ENCODE measurements at regions of chr22 and their contacts with region 1.

Region 1: GRCh38 chr22:35840302-35840739 is 122.6 kb downstream of the APOL5 start:
- DNase-seq: peak; percentile 62 to 97
- ATAC-seq: peak; percentile 84 to 88
- H3K4me3 ChIP-seq: peak overlapping the region; percentile 69
- H3K27ac ChIP-seq: peak overlapping the region; percentile 79 to 90
- H3K4me1 ChIP-seq: peaks cover 52% of the 10 kb centered on the region
- CTCF ChIP-seq: no peak
- EP300 ChIP-seq: no peak
- POLR2A ChIP-seq: no peak
- RAD21 ChIP-seq: 0 out of 5 replicates have a peak, but pooled peaks of 1 of the 2 experiments have one; percentile 16

Region 2: GRCh38 chr22:35705141-35705540 is 135.2 kb before region 1 on chr22:
- CTCF ChIA-PET with region 1: no interaction called
- POLR2A ChIA-PET with region 1: no interaction called
- DNase-seq: no peak
- ATAC-seq: peak in 1 of 2 experiments; percentile 41; a peak in 2 of 6 replicates
- H3K4me3 ChIP-seq: no peak overlapping the region
- H3K27ac ChIP-seq: no peak overlapping the region; a peak in 1 of 6 replicates
- H3K4me1 ChIP-seq: peaks cover 3% of the 10 kb centered on the region; the same call in 1 of the 3 replicates
- CTCF ChIP-seq: no peak
- EP300 ChIP-seq: no peak
- POLR2A ChIP-seq: no peak
- RAD21 ChIP-seq: no peak

Region 3: DNA sequence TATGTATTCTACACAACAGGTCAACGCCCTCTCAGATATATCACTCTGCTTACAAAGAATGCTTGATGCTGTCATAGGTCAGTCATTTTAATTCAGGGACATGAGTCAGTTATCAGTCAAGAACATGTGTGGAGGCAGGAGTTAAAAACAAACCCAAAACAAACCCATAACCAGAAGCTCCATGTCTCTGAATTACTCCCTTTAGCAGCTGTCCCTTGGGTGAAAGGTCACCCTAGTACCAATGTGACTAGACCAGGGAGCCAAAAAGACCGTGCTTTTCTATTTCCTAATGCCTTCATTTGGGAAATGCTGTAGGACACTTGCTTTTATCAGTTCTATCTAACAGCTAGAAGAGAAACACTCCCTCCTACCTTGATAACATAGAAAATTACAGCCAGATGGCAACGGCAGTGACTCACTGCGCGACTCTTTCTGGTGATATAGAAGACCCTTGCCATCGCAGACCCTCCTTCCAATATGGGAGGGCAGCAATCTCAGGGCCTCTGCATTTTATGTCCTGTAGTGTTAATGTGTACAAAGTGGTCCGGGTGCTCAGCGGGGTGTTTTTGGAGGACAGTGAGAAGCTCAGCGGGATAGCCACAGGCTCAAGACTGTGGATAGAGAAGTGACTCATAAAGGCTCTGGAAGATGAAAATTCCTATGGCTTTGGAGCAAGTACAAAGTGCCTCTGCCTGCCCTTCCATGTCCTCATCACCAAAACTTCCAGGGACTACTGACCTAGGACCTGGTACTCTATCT is 97.8 kb before region 1 on chr22:
- CTCF ChIA-PET with region 1: no interaction called
- POLR2A ChIA-PET with region 1: interaction called, 10 read pairs
- DNase-seq: peak in 1 of 2 experiments; percentile 7
- ATAC-seq: peak in 1 of 2 experiments; percentile 48; a peak in 2 of 6 replicates
- H3K4me3 ChIP-seq: no peak overlapping the region
- H3K27ac ChIP-seq: no peak overlapping the region
- H3K4me1 ChIP-seq: peaks cover 18% of the 10 kb centered on the region
- CTCF ChIP-seq: no peak
- EP300 ChIP-seq: no peak
- POLR2A ChIP-seq: no peak
- RAD21 ChIP-seq: no peak

Region 4: GRCh38 chr22:35921777-35922176 is 81.5 kb after region 1 on chr22:
- CTCF ChIA-PET with region 1: interaction called, 11 read pairs
- POLR2A ChIA-PET with region 1: no interaction called
- DNase-seq: peak; percentile 31 to 83
- ATAC-seq: peak; percentile 98 to 99
- H3K4me3 ChIP-seq: no peak overlapping the region
- H3K27ac ChIP-seq: peak overlapping the region; percentile 66 to 72; a peak in 5 of 6 replicates
- H3K4me1 ChIP-seq: peaks cover 25% of the 10 kb centered on the region
- CTCF ChIP-seq: peak; percentile 75
- EP300 ChIP-seq: no peak
- POLR2A ChIP-seq: no peak
- RAD21 ChIP-seq: peak; percentile 86 to 87

Measured in A549 (cell line).